ENCODE measurements at regions of chr6 and their contacts with region 1.

Region 1: DNA sequence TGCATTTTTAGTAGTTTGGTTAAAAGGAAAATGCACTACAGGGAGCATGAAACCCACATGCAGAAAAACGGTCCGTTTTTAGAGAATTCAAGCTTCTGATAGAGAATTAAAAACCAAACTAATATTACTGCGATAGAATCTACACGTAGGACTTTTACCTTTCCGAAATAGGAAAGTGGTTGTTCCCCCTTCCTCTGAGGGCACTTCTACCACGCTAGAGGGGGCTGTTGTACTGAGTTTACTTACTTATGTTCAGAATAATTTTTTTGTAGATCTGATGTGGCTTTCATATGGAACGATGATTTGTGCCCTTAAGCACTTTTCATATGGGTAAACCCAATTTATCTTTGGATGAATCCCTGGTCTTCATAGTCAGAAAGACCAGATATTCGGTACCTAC is 264.3 kb upstream of the PLN start:
- DNase-seq: peak in 7 of 9 donors; percentile 12 to 69 (median 59)
- ATAC-seq: peak; percentile 68
- H3K4me3 ChIP-seq: no peak overlapping the region
- H3K4me3 Mint-ChIP-seq: no peak overlapping the region
- H3K27ac ChIP-seq: no peak overlapping the region
- H3K27ac Mint-ChIP-seq: peak overlapping the region in 1 of 9 donors; percentile 40
- H3K4me1 ChIP-seq: no peaks in the 10 kb centered on the region
- H3K4me1 Mint-ChIP-seq: peaks cover 0 to 7% (median 0%) of the 10 kb centered on the region in 7 donors
- H3K27me3 ChIP-seq: no peaks in the 10 kb centered on the region
- H3K27me3 Mint-ChIP-seq: peaks cover 6 to 38% (median 14%) of the 10 kb centered on the region in 5 donors

Region 2: DNA sequence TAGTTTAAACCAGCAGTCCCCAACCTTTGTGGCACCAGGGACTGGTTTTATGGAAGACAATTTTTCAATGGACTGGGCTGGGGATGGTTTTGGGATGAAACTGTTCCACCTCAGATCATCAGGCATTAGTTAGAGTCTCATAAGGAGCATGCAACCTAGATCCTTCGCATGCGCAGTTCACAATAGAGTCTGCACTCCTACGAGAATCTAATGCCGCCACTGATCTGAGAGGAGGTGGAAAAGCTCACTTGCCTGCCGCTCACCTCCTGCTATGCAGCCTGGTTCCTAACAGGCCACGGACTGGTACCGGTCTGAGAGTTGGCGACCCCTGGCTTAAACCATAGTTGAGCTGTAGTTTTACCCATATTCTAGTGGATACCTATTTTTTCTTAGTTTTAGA is 222.1 kb before region 1 on chr6:
- CTCF ChIA-PET with region 1: no interaction called
- POLR2A ChIA-PET with region 1: no interaction called
- intact Hi-C with region 1: no loop called
- DNase-seq: no peak
- ATAC-seq: no peak
- H3K4me3 ChIP-seq: no peak overlapping the region
- H3K4me3 Mint-ChIP-seq: no peak overlapping the region
- H3K27ac ChIP-seq: no peak overlapping the region
- H3K27ac Mint-ChIP-seq: no peak overlapping the region
- H3K4me1 ChIP-seq: no peaks in the 10 kb centered on the region
- H3K4me1 Mint-ChIP-seq: no peaks in the 10 kb centered on the region
- H3K27me3 ChIP-seq: no peaks in the 10 kb centered on the region
- H3K27me3 Mint-ChIP-seq: peaks cover 0 to 20% (median 12%) of the 10 kb centered on the region in 5 donors

Region 3: GRCh38 chr6:118509009-118509617 is 225.3 kb after region 1 on chr6:
- CTCF ChIA-PET with region 1: no interaction called
- POLR2A ChIA-PET with region 1: no interaction called
- intact Hi-C with region 1: loop called in 1 of 2 experiments (anchors 2 kb)
- DNase-seq: no peak
- ATAC-seq: no peak
- H3K4me3 ChIP-seq: no peak overlapping the region
- H3K4me3 Mint-ChIP-seq: no peak overlapping the region
- H3K27ac ChIP-seq: no peak overlapping the region
- H3K27ac Mint-ChIP-seq: peak overlapping the region in 2 of 9 donors; percentile 22 to 25
- H3K4me1 ChIP-seq: no peaks in the 10 kb centered on the region
- H3K4me1 Mint-ChIP-seq: peaks cover 7 to 54% (median 35%) of the 10 kb centered on the region in 7 donors
- H3K27me3 ChIP-seq: no peaks in the 10 kb centered on the region
- H3K27me3 Mint-ChIP-seq: no peaks in the 10 kb centered on the region

Region 4: DNA sequence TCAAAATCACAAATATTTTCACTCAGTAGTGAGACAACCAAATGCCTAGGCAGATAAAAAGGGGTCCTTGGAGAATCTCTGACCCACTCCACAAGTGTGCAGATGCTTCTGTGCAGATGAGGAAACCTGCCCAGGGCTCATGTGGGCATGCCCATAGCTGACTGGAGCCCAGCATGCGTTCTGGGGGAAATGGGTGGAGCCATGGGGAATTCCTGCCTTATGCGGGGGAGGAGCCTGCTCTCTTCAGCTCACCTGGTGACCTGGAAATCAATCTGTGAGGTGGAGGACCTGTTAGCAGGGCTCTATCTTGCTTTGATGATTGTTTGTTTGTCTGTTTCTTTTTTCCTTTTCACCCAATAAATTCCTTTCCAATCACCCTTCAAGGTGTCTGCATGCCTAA is 240.9 kb after region 1 on chr6:
- CTCF ChIA-PET with region 1: no interaction called
- POLR2A ChIA-PET with region 1: no interaction called
- intact Hi-C with region 1: no loop called
- DNase-seq: no peak
- ATAC-seq: peak; percentile 26
- H3K4me3 ChIP-seq: no peak overlapping the region
- H3K4me3 Mint-ChIP-seq: no peak overlapping the region
- H3K27ac ChIP-seq: no peak overlapping the region
- H3K27ac Mint-ChIP-seq: peak overlapping the region in 2 of 9 donors; percentile 38 to 71
- H3K4me1 ChIP-seq: no peaks in the 10 kb centered on the region
- H3K4me1 Mint-ChIP-seq: peaks cover 17 to 58% (median 48%) of the 10 kb centered on the region in 7 donors
- H3K27me3 ChIP-seq: no peaks in the 10 kb centered on the region
- H3K27me3 Mint-ChIP-seq: no peaks in the 10 kb centered on the region

Region 5: GRCh38 chr6:118551063-118552053 is 267.6 kb after region 1 on chr6:
- CTCF ChIA-PET with region 1: interaction called, 3 read pairs
- POLR2A ChIA-PET with region 1: no interaction called
- intact Hi-C with region 1: loop called (anchors 1 kb)
- DNase-seq: peak in 7 of 9 donors; percentile 23 to 62 (median 47)
- ATAC-seq: peak; percentile 88
- H3K4me3 ChIP-seq: no peak overlapping the region
- H3K4me3 Mint-ChIP-seq: peak overlapping the region in 4 of 10 donors; percentile 19 to 63 (median 35)
- H3K27ac ChIP-seq: no peak overlapping the region
- H3K27ac Mint-ChIP-seq: peak overlapping the region in 8 of 9 donors; percentile 19 to 83 (median 42)
- H3K4me1 ChIP-seq: peaks cover 0 to 4% of the 10 kb centered on the region in 2 donors
- H3K4me1 Mint-ChIP-seq: peaks cover 16 to 79% (median 63%) of the 10 kb centered on the region in 7 donors
- H3K27me3 ChIP-seq: no peaks in the 10 kb centered on the region
- H3K27me3 Mint-ChIP-seq: no peaks in the 10 kb centered on the region

Region 6: DNA sequence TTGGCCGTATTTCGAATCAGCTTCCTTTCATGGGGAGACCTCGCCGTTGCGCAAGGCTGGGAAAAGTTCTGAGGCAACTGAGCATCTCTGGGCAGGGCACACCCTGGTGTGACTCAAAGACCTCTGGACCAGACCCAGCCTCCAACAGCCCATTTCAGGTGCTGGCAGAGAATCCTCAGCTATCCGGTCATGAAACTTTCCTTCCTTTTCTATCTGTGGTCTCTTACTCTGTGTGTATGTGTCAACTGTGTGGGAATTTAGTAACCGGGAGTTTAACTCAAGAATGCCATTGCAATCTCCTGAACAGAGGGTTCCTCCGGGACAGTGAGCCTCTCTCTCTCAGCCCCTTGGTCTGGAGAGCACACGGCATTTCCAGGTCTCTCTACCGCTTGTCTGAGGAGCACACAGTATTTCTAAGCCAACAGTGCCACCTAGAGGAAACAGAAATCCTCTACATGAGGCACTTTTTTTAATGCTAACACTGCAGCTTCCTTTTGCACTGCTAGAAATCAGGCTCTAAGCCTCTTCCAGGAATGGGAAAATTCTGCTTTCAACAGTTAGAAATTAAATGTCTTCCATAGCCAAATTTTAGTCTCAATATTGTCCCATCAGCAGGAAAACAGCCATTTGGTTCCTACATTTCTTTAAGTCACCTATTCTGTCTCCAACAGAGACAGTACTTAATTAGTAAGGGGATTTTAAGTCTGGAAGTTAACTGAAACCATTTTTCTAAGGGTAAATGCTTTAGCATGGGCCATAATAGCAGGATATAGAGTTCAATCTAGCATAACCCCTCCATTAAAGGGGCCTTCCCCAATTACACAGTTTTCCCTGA is 297.0 kb after region 1 on chr6:
- CTCF ChIA-PET with region 1: interaction called, 3 read pairs
- POLR2A ChIA-PET with region 1: no interaction called
- intact Hi-C with region 1: loop called in 1 of 2 experiments (anchors 1 kb)
- DNase-seq: peak in 5 of 9 donors; percentile 11 to 37 (median 16)
- ATAC-seq: peak; percentile 78
- H3K4me3 ChIP-seq: no peak overlapping the region
- H3K4me3 Mint-ChIP-seq: peak overlapping the region in 2 of 10 donors; percentile 7 to 64
- H3K27ac ChIP-seq: no peak overlapping the region
- H3K27ac Mint-ChIP-seq: peak overlapping the region in 7 of 9 donors; percentile 60 to 92 (median 85)
- H3K4me1 ChIP-seq: no peaks in the 10 kb centered on the region
- H3K4me1 Mint-ChIP-seq: peaks cover 0 to 31% (median 13%) of the 10 kb centered on the region in 7 donors
- H3K27me3 ChIP-seq: no peaks in the 10 kb centered on the region
- H3K27me3 Mint-ChIP-seq: no peaks in the 10 kb centered on the region

Region 7: DNA sequence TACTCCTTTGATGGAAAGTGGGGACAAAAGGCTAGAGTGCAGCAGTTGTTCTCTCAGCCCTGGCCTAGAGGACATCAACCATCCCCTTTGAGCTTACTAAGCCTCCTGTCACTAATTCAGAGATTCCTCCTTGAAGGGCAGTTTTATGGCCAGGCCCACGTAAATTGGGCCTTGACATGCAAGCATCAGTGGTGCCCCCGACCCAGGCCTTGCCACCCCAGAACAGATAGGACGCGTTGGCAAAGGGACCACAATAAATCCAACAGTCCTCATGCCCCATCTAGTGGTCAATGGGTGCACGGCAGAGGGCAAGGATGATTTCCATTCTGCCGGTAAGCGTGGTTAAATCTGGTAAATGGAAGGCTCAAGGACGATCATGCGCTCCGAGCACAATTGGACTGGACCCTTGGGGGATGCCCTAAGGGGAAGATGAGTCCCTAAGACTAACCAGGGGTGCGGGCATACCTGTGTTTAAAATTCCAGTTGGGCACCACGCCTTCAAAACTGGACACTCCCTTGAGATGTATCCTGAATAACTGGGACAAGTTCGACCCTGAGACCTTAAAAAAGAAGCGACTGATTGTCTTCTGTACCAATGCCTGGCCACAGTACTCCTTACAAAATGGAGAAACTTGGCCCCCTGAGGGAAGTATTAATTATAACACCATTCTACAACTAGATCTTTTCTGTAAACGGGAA is 335.1 kb after region 1 on chr6:
- CTCF ChIA-PET with region 1: interaction called, 3 read pairs
- POLR2A ChIA-PET with region 1: no interaction called
- intact Hi-C with region 1: loop called (anchors 1 kb)
- DNase-seq: peak; percentile 36 to 70 (median 55)
- ATAC-seq: peak; percentile 92
- H3K4me3 ChIP-seq: no peak overlapping the region
- H3K4me3 Mint-ChIP-seq: peak overlapping the region in 3 of 10 donors; percentile 2 to 52 (median 46)
- H3K27ac ChIP-seq: no peak overlapping the region
- H3K27ac Mint-ChIP-seq: peak overlapping the region; percentile 26 to 96 (median 79)
- H3K4me1 ChIP-seq: peaks cover 0 to 8% of the 10 kb centered on the region in 2 donors
- H3K4me1 Mint-ChIP-seq: peaks cover 21 to 86% (median 77%) of the 10 kb centered on the region in 7 donors
- H3K27me3 ChIP-seq: no peaks in the 10 kb centered on the region
- H3K27me3 Mint-ChIP-seq: no peaks in the 10 kb centered on the region

Region 8: DNA sequence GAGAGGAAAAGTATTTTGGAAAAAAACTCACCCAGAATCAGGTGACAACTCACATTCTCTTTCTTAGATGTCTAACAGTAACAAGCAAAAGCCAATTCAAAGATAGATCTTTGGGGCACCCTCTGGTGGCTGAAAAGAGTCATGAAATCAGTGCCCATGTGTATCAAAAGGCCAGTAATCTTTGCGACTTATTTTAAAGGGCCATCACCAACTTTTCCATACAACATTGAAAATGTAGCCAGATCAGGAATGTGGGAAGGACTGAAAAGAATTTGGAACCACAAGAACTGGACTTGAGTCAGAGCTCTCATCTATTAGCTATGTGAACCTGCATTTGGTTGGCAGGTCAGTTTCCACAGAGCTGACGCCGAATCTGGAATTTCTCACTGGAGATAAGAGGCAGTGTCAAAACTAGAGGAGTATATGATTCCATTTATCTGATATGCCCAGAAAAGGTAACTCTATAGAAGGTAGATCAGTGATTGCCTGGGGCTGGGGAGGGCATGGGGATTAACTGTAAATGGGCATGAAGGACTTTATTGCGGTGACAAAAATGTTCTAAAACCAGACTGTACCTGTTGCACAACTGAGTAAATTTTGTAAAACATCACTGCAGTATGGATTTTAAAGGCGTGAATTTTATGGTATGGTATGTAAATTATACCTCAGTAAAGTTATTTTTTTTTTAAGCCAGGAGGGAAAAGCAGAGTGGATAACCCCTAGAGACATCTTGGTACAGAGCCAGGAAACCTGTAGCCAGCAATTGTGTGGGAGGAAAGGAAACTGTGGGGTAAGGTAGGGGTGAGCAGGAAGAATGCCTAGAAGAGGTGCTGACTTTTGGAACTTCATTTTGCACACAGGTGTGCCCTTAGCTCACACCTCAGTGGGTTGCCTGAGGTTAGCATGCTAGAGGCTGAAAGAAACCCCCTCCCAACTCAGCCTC is 493.1 kb after region 1 on chr6:
- CTCF ChIA-PET with region 1: no interaction called
- POLR2A ChIA-PET with region 1: no interaction called
- intact Hi-C with region 1: loop called (anchors 1 kb)
- DNase-seq: peak in 8 of 9 donors; percentile 42 to 77 (median 65)
- ATAC-seq: peak; percentile 92
- H3K4me3 ChIP-seq: no peak overlapping the region
- H3K4me3 Mint-ChIP-seq: peak overlapping the region; percentile 1 to 75 (median 48)
- H3K27ac ChIP-seq: no peak overlapping the region
- H3K27ac Mint-ChIP-seq: peak overlapping the region in 8 of 9 donors; percentile 12 to 87 (median 75)
- H3K4me1 ChIP-seq: peaks cover 4 to 11% of the 10 kb centered on the region in 2 donors
- H3K4me1 Mint-ChIP-seq: peaks cover 16 to 31% (median 23%) of the 10 kb centered on the region in 7 donors
- H3K27me3 ChIP-seq: no peaks in the 10 kb centered on the region
- H3K27me3 Mint-ChIP-seq: peaks cover 0 to 17% (median 0%) of the 10 kb centered on the region in 5 donors

Region 9: DNA sequence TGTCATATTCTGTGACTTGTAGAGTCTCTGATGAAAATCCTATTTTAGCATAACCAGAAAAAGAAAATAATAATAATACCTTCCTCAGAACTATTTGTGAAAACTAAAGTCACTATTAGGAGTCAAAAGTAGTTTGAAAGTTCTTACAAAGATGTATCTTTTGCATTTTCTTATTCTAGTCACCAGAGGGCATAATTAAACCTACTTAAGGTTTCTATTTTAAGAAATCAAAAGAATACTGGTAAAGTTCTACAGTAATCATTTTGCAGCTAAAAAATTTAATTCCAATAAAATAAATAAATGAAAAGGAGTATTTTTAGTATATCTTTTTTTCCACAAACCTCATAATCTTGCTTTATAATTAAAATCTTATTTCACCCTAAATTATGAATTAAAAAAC is 679.2 kb after region 1 on chr6:
- CTCF ChIA-PET with region 1: no interaction called
- POLR2A ChIA-PET with region 1: no interaction called
- intact Hi-C with region 1: loop called in 1 of 2 experiments (anchors 1 kb)
- DNase-seq: peak in 4 of 9 donors; percentile 6 to 20 (median 12)
- ATAC-seq: no peak
- H3K4me3 ChIP-seq: no peak overlapping the region
- H3K4me3 Mint-ChIP-seq: no peak overlapping the region
- H3K27ac ChIP-seq: no peak overlapping the region
- H3K27ac Mint-ChIP-seq: no peak overlapping the region
- H3K4me1 ChIP-seq: no peaks in the 10 kb centered on the region
- H3K4me1 Mint-ChIP-seq: peaks cover 0 to 14% (median 7%) of the 10 kb centered on the region in 7 donors
- H3K27me3 ChIP-seq: no peaks in the 10 kb centered on the region
- H3K27me3 Mint-ChIP-seq: no peaks in the 10 kb centered on the region

Region 10: GRCh38 chr6:119020597-119021561 is 737.1 kb after region 1 on chr6:
- CTCF ChIA-PET with region 1: no interaction called
- POLR2A ChIA-PET with region 1: no interaction called
- intact Hi-C with region 1: no loop called
- DNase-seq: no peak
- ATAC-seq: no peak
- H3K4me3 ChIP-seq: no peak overlapping the region
- H3K4me3 Mint-ChIP-seq: no peak overlapping the region
- H3K27ac ChIP-seq: no peak overlapping the region
- H3K27ac Mint-ChIP-seq: peak overlapping the region in 1 of 9 donors; percentile 37
- H3K4me1 ChIP-seq: no peaks in the 10 kb centered on the region
- H3K4me1 Mint-ChIP-seq: peaks cover 0 to 5% (median 0%) of the 10 kb centered on the region in 7 donors
- H3K27me3 ChIP-seq: no peaks in the 10 kb centered on the region
- H3K27me3 Mint-ChIP-seq: no peaks in the 10 kb centered on the region

Measured in naive thymus-derived CD4-positive, alpha-beta T cell (primary cell).